ENCODE measurements at regions of chr2 and their contacts with region 1.

Region 1: DNA sequence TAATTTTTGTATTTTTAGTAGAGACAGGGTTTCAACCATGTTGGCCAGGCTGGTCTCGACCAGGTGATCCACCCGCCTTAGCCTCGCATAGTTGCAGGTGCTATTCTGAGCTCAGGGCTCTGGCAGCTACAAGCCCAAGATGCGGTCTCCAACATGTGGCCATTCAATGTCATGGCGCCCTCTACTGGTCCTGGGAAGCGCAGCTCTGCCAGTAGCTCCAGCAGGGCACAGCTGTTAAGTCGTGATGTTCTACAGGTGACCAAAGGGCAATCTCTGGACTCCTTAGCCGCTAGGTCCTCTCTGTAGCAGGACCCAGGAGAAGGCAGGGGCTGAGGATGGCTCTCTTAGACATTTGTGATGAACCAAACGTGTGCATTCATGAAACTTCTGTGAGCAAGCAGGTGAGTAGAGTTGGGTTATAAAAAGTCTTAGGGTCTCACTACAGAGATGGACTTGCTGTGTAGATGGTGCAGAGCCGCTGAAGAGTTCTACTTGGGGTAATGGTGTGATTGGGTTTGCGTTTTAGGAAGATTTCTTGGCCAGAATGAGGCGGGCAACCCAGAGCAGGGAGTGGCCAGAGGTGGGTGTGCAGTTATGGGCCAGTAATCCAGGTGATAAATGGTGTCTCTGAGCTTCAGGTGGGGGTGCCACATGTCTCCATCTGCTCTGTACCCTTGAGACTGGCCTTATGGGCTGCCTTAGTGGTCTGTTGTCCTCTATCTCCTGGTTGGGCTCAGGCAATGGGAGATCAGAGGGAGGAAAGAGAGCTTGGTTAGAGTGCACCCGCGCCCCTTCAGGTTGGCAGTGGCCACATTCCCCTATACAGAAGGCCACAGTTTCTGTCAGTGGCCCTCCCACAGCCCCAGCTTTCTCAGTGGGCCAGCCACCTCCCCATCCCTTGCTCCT is 31.0 kb downstream of the IL37 start:
- DNase-seq: no peak
- H3K4me3 ChIP-seq: no peak overlapping the region
- H3K27ac ChIP-seq: no peak overlapping the region
- H3K4me1 ChIP-seq: no peaks in the 10 kb centered on the region
- H3K27me3 ChIP-seq: no peaks in the 10 kb centered on the region
- CTCF ChIP-seq: peak; percentile 38 to 92 (median 79)
- POLR2A ChIP-seq: no peak

Region 2: GRCh38 chr2:112606488-112606902 is 335.5 kb before region 1 on chr2:
- intact Hi-C with region 1: loop called (anchors 10 kb)
- DNase-seq: no peak
- H3K4me3 ChIP-seq: no peak overlapping the region
- H3K27ac ChIP-seq: no peak overlapping the region
- H3K4me1 ChIP-seq: no peaks in the 10 kb centered on the region
- H3K27me3 ChIP-seq: no peaks in the 10 kb centered on the region
- CTCF ChIP-seq: no peak
- POLR2A ChIP-seq: no peak

Region 3: GRCh38 chr2:112749755-112750559 is 192.0 kb before region 1 on chr2:
- intact Hi-C with region 1: loop called (anchors 5 kb)
- DNase-seq: no peak
- H3K4me3 ChIP-seq: no peak overlapping the region
- H3K27ac ChIP-seq: peak overlapping the region in 1 of 4 donors; percentile 19
- H3K4me1 ChIP-seq: peaks cover 0 to 9% (median 0%) of the 10 kb centered on the region in 3 donors
- H3K27me3 ChIP-seq: no peaks in the 10 kb centered on the region
- CTCF ChIP-seq: peak; percentile 78 to 95 (median 92)
- POLR2A ChIP-seq: no peak

Region 4: GRCh38 chr2:113309655-113310387 is 367.8 kb after region 1 on chr2:
- intact Hi-C with region 1: no loop called
- DNase-seq: no peak
- H3K4me3 ChIP-seq: no peak overlapping the region
- H3K27ac ChIP-seq: peak overlapping the region; percentile 39 to 66 (median 50)
- H3K4me1 ChIP-seq: peaks cover 0 to 44% (median 13%) of the 10 kb centered on the region in 3 donors
- H3K27me3 ChIP-seq: peaks cover 0 to 7% (median 0%) of the 10 kb centered on the region in 4 donors
- CTCF ChIP-seq: no peak
- POLR2A ChIP-seq: no peak

Measured in esophagus squamous epithelium (tissue), 5 donors.